Astrocyte of the cerebellum (primary cell): ENCODE measurements at regions of chr4 and their contacts with region 1.

Region 1: GRCh38 chr4:120228086-120228485 is 161.4 kb upstream of the MAD2L1 start:
- DNase-seq: no peak
- H3K4me3 ChIP-seq: no peak overlapping the region
- CTCF ChIP-seq: no peak

Region 2: GRCh38 chr4:120263618-120264017 is 35.5 kb after region 1 on chr4:
- in situ Hi-C with region 1: loop called (anchors 5 kb)
- DNase-seq: no peak
- H3K4me3 ChIP-seq: no peak overlapping the region
- CTCF ChIP-seq: no peak